B cell (primary cell): ENCODE measurements at regions of chr17 and their contacts with region 1.

Region 1: DNA sequence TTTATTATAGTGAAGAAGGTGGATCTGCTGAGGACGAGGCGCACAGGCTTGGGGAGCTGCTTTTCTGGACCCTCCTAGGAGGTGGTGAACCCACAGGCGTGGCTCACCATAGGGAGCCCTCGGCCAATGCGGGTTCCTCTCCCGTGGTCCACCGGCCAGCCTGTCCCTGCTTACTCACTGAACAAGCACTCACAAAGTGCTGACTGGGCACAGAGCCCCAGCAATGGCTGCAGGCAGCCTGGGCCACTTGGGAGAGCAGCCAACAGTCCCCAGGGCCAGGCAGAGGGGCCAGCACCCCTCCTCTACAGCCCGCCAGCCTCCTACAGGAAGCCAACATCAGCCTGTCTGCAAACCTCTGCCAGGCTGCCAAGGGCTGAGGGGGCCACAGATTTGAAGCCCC is 19.1 kb upstream of the NCBP3 start:
- DNase-seq: no peak
- ATAC-seq: no peak
- H3K4me3 ChIP-seq: no peak overlapping the region
- H3K4me3 Mint-ChIP-seq: no peak overlapping the region
- H3K27ac ChIP-seq: no peak overlapping the region
- H3K27ac Mint-ChIP-seq: no peak overlapping the region
- H3K4me1 ChIP-seq: no peaks in the 10 kb centered on the region
- H3K4me1 Mint-ChIP-seq: no peaks in the 10 kb centered on the region
- H3K27me3 ChIP-seq: no peaks in the 10 kb centered on the region
- H3K27me3 Mint-ChIP-seq: no peaks in the 10 kb centered on the region
- CTCF ChIP-seq: no peak

Region 2: GRCh38 chr17:3893003-3893719 is 28.0 kb after region 1 on chr17 and contains the start of gene CAMKK1:
- CTCF ChIA-PET with region 1: interaction called, 8 read pairs
- POLR2A ChIA-PET with region 1: no interaction called
- intact Hi-C with region 1: loop called (anchors 1 kb)
- DNase-seq: peak; percentile 95
- ATAC-seq: peak; percentile 86
- H3K4me3 ChIP-seq: peak within 1 kb of the TSS; percentile 14 to 75 (median 64)
- H3K4me3 Mint-ChIP-seq: peak within 1 kb of the TSS; percentile 93
- H3K27ac ChIP-seq: peak within 1 kb of the TSS; percentile 56 to 57
- H3K27ac Mint-ChIP-seq: peak within 1 kb of the TSS; percentile 89
- H3K4me1 ChIP-seq: peaks cover 20 to 42% of the 10 kb centered on the region in 2 donors
- H3K4me1 Mint-ChIP-seq: peaks cover 40% of the 10 kb centered on the region
- H3K27me3 ChIP-seq: no peaks in the 10 kb centered on the region
- H3K27me3 Mint-ChIP-seq: no peaks in the 10 kb centered on the region
- CTCF ChIP-seq: no peak
- total RNA-seq, gene CAMKK1: 35.9 and 37.1 TPM in 2 replicates

Region 3: DNA sequence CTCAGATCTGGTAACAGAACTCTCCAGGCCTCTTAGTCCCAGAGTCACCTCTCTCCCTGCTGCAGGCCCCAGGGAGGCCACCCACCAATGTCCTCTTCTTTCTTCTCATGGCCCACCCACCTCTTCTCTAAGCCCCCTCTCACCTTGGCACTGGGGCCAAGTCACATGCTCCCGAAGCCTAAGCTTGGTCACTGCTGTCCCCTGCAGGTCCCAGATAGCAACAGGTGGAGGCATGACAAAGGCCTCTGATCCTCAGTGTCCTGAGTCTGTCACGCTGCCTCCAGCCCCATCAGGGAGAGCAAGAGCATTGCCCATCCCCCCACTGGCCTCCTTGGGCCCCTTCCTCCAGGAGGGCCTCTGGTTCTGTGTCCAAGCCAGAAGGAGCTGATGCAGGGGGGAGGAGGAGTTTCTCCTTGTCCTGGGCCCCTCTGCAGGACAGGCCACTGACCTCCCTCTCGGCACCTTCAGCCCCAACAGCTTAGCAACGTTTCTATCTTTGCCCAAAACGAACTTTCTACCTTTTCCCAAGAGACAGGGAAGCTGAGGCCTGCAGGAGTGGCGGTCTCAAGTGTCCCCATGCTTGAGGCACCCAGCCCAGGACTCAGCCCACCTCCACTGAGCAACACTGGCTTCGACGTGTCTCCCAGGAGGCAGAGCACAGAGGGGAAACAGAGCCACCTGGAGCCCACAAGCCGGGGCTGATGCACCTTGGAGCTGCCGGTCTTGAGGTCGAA is 42.5 kb after region 1 on chr17:
- CTCF ChIA-PET with region 1: interaction called, 53 read pairs
- POLR2A ChIA-PET with region 1: interaction called, 7 read pairs
- intact Hi-C with region 1: loop called (anchors 1 kb)
- DNase-seq: no peak
- ATAC-seq: no peak
- H3K4me3 ChIP-seq: no peak overlapping the region
- H3K4me3 Mint-ChIP-seq: no peak overlapping the region
- H3K27ac ChIP-seq: no peak overlapping the region
- H3K27ac Mint-ChIP-seq: peak overlapping the region; percentile 53
- H3K4me1 ChIP-seq: peaks cover 42 to 56% of the 10 kb centered on the region in 2 donors
- H3K4me1 Mint-ChIP-seq: peaks cover 54% of the 10 kb centered on the region
- H3K27me3 ChIP-seq: no peaks in the 10 kb centered on the region
- H3K27me3 Mint-ChIP-seq: no peaks in the 10 kb centered on the region
- CTCF ChIP-seq: no peak

Region 4: DNA sequence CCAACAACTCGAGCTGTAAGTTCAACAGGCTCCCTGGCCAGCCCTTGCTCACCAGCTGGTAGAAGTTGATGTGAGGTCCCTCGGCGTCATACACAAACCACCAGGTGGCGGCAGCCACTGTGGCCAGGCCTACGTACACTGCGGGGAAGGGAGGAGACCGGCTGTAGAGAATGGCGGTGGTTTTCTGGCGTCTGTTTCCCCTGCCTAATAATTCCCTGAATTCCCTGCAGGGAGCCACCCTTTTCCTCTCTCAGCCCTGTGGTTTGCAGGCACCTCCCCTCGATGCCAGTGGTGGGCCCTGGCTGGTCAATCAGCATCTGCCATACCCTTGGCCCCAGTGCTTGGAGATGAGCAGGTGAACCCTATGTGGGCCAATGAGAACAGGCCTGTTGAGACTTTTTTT is 70.0 kb after region 1 on chr17:
- CTCF ChIA-PET with region 1: interaction called, 10 read pairs
- POLR2A ChIA-PET with region 1: interaction called, 3 read pairs
- intact Hi-C with region 1: no loop called
- DNase-seq: peak; percentile 72
- ATAC-seq: peak; percentile 61
- H3K4me3 ChIP-seq: no peak overlapping the region
- H3K4me3 Mint-ChIP-seq: no peak overlapping the region
- H3K27ac ChIP-seq: peak overlapping the region in 1 of 2 donors; percentile 30
- H3K27ac Mint-ChIP-seq: peak overlapping the region; percentile 61
- H3K4me1 ChIP-seq: no peaks in the 10 kb centered on the region
- H3K4me1 Mint-ChIP-seq: no peaks in the 10 kb centered on the region
- H3K27me3 ChIP-seq: no peaks in the 10 kb centered on the region
- H3K27me3 Mint-ChIP-seq: no peaks in the 10 kb centered on the region
- CTCF ChIP-seq: peak; percentile 57

Region 5: GRCh38 chr17:4004517-4005295 is 139.5 kb after region 1 on chr17:
- CTCF ChIA-PET with region 1: interaction called, 37 read pairs
- POLR2A ChIA-PET with region 1: interaction called, 5 read pairs
- intact Hi-C with region 1: no loop called
- DNase-seq: peak; percentile 80
- ATAC-seq: peak; percentile 71
- H3K4me3 ChIP-seq: no peak overlapping the region
- H3K4me3 Mint-ChIP-seq: peak overlapping the region; percentile 20
- H3K27ac ChIP-seq: no peak overlapping the region
- H3K27ac Mint-ChIP-seq: no peak overlapping the region
- H3K4me1 ChIP-seq: peaks cover 16 to 35% of the 10 kb centered on the region in 2 donors
- H3K4me1 Mint-ChIP-seq: peaks cover 27% of the 10 kb centered on the region
- H3K27me3 ChIP-seq: no peaks in the 10 kb centered on the region
- H3K27me3 Mint-ChIP-seq: no peaks in the 10 kb centered on the region
- CTCF ChIP-seq: peak; percentile 98

Region 6: GRCh38 chr17:4074831-4075495 is 209.8 kb after region 1 on chr17:
- CTCF ChIA-PET with region 1: interaction called, 10 read pairs
- POLR2A ChIA-PET with region 1: no interaction called
- intact Hi-C with region 1: loop called (anchors 1 kb)
- DNase-seq: peak; percentile 75
- ATAC-seq: peak; percentile 53
- H3K4me3 ChIP-seq: no peak overlapping the region
- H3K4me3 Mint-ChIP-seq: peak overlapping the region; percentile 75
- H3K27ac ChIP-seq: peak overlapping the region; percentile 20 to 54
- H3K27ac Mint-ChIP-seq: peak overlapping the region; percentile 76
- H3K4me1 ChIP-seq: peaks cover 13 to 17% of the 10 kb centered on the region in 2 donors
- H3K4me1 Mint-ChIP-seq: peaks cover 18% of the 10 kb centered on the region
- H3K27me3 ChIP-seq: no peaks in the 10 kb centered on the region
- H3K27me3 Mint-ChIP-seq: no peaks in the 10 kb centered on the region
- CTCF ChIP-seq: peak; percentile 78

Region 7: GRCh38 chr17:4287710-4288109 is 422.5 kb after region 1 on chr17:
- CTCF ChIA-PET with region 1: no interaction called
- POLR2A ChIA-PET with region 1: no interaction called
- intact Hi-C with region 1: no loop called
- DNase-seq: no peak
- ATAC-seq: no peak
- H3K4me3 ChIP-seq: no peak overlapping the region
- H3K4me3 Mint-ChIP-seq: no peak overlapping the region
- H3K27ac ChIP-seq: no peak overlapping the region
- H3K27ac Mint-ChIP-seq: no peak overlapping the region
- H3K4me1 ChIP-seq: no peaks in the 10 kb centered on the region
- H3K4me1 Mint-ChIP-seq: peaks cover 5% of the 10 kb centered on the region
- H3K27me3 ChIP-seq: no peaks in the 10 kb centered on the region
- H3K27me3 Mint-ChIP-seq: no peaks in the 10 kb centered on the region
- CTCF ChIP-seq: no peak